Mammary epithelial cell (primary cell): ENCODE measurements at regions of chrX and their contacts with region 1.

Region 1: DNA sequence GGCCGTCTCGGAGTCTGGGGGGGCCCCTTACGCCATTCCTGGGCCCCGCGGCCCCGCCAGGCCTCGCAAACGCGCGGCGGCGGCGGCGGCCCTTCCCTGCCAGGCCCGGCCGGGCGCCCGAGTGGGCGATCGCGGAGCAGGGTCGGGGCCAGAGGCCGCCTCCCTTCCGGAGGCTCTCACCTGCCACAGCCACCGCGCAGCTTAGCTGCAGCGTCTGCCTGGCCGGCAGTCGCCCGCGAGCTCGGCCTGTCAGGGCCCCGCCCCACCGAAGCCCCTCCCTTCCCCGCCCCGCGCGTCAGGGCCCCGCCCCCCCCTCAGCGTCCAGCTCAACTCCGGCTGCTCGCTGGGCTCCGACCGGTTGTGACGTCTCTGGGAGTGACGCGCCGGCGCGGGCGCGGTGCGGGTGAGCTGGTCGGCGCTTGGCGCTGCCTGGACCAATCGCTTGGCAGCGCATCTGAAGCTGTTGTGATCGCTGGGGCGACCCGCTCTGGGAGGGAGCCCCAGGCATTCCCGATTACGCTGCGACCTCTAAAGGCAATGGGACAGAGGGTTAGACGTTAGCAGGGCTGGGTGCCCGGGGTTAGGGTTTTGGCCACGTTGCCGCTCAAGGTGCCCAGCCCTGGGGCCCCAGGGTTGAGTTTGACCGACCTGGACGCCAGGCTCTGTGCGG is at the start of gene SLC10A3:
- DNase-seq: peak; percentile 88
- H3K4me3 ChIP-seq: peak within 1 kb of the TSS; percentile 64 to 69 (median 68)
- H3K27ac ChIP-seq: peak within 1 kb of the TSS; percentile 75
- H3K4me1 ChIP-seq: peaks cover 5% of the 10 kb centered on the region
- H3K27me3 ChIP-seq: no peaks in the 10 kb centered on the region
- CTCF ChIP-seq: no peak
- total RNA-seq, gene SLC10A3: 27.2 to 29.6 TPM

Region 2: DNA sequence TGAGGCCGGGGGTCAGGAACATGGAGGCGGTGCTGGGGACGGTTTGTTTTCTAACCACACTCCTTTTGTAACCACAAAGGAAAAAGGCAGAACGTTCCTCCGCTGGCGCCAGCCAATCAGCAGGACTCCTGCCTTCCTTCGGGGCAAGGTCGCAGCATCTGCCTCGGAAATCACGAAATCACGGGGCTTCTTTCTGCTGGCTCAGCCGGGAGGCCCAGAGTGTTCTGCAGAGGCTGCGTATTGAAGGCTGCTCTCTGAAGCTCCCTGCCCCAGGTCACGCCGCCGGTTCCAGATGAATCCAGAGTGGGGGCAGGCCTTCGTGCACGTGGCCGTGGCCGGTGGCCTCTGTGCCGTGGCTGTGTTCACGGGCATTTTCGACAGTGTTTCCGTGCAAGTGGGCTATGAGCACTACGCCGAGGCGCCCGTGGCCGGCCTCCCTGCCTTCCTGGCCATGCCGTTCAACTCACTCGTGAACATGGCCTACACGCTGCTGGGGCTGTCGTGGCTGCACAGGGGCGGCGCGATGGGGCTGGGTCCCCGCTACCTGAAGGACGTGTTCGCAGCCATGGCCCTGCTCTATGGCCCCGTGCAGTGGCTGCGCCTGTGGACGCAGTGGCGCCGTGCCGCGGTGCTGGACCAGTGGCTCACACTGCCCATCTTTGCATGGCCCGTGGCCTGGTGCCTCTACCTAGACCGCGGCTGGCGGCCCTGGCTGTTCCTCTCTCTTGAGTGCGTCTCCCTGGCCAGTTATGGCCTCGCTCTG is 508.6 kb before region 1 on chrX:
- CTCF ChIA-PET with region 1: no interaction called
- dilution Hi-C with region 1: no loop called
- in situ Hi-C with region 1: no loop called
- intact Hi-C with region 1: no loop called
- DNase-seq: no peak
- H3K4me3 ChIP-seq: no peak overlapping the region
- H3K27ac ChIP-seq: no peak overlapping the region
- H3K4me1 ChIP-seq: peaks cover 5% of the 10 kb centered on the region
- H3K27me3 ChIP-seq: no peaks in the 10 kb centered on the region
- CTCF ChIP-seq: no peak

Region 3: GRCh38 chrX:154444755-154445246 is 45.7 kb before region 1 on chrX:
- CTCF ChIA-PET with region 1: no interaction called
- dilution Hi-C with region 1: no loop called
- in situ Hi-C with region 1: no loop called
- intact Hi-C with region 1: no loop called
- DNase-seq: no peak
- H3K4me3 ChIP-seq: peak overlapping the region; percentile 41 to 60 (median 57)
- H3K27ac ChIP-seq: no peak overlapping the region
- H3K4me1 ChIP-seq: peaks cover 16% of the 10 kb centered on the region
- H3K27me3 ChIP-seq: no peaks in the 10 kb centered on the region
- CTCF ChIP-seq: no peak

Region 4: DNA sequence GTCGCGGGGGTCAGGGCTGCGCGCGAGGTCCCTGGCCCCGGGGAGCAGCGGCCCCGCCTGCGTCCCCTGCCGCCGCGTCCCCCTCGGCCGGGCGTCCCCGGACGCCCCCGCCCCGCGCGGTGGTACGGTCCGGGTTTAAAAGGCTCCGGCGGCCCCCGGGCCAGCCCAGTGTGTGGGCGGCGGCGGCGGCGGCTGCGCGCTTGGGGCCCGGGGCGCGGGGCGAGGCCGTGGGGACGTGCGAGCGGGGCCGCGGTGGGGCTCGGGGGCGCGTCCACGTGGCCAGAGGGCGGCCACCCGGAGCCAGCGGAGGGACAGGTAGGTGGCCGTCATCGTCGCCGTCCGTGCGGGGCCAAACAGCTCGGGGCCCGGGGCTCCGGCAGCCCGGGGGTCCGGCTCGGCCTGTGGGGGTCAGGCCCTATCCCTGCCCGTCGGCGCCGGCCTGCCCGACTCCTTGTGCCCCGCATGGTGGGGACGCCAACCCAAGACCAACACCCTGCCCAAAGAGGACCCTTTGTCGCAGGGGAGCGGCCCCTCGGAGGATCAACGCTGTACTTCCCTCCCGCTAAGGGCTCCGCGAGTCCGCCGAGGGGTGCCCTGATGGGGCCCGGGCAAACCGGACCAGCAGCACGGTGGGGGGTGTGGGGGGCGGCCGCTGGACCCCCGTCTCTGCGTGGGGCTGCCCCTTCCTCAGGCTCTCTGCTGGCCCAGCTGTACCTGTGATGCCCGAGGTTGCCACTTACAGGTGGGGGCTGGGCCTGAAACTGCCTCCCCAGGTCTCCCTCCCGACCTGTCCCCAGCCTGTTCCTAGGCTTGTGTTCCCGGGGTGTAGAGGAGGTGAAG is 32.2 kb before region 1 on chrX and contains the start of gene PLXNA3:
- CTCF ChIA-PET with region 1: no interaction called
- dilution Hi-C with region 1: no loop called
- in situ Hi-C with region 1: no loop called
- intact Hi-C with region 1: loop called (anchors 1 kb)
- DNase-seq: no peak
- H3K4me3 ChIP-seq: peak within 1 kb of the TSS; percentile 56 to 77 (median 75)
- H3K27ac ChIP-seq: no peak within 1 kb of the TSS
- H3K4me1 ChIP-seq: peaks cover 4% of the 10 kb centered on the region
- H3K27me3 ChIP-seq: no peaks in the 10 kb centered on the region
- CTCF ChIP-seq: no peak
- total RNA-seq, gene PLXNA3: 21.2 to 56.9 TPM

Region 5: GRCh38 chrX:154505734-154506133 is 15.2 kb after region 1 on chrX:
- CTCF ChIA-PET with region 1: no interaction called
- dilution Hi-C with region 1: no loop called
- in situ Hi-C with region 1: no loop called
- intact Hi-C with region 1: no loop called
- DNase-seq: peak; percentile 44
- H3K4me3 ChIP-seq: no peak overlapping the region
- H3K27ac ChIP-seq: no peak overlapping the region
- H3K4me1 ChIP-seq: peaks cover 16% of the 10 kb centered on the region
- H3K27me3 ChIP-seq: no peaks in the 10 kb centered on the region
- CTCF ChIP-seq: no peak

Region 6: GRCh38 chrX:154515878-154516655 is 25.5 kb after region 1 on chrX and contains the start of gene FAM3A:
- CTCF ChIA-PET with region 1: no interaction called
- dilution Hi-C with region 1: no loop called
- in situ Hi-C with region 1: no loop called
- intact Hi-C with region 1: loop called (anchors 2 kb)
- DNase-seq: peak; percentile 80
- H3K4me3 ChIP-seq: peak within 1 kb of the TSS; percentile 40 to 71 (median 64)
- H3K27ac ChIP-seq: peak within 1 kb of the TSS; percentile 38
- H3K4me1 ChIP-seq: no peaks in the 10 kb centered on the region
- H3K27me3 ChIP-seq: no peaks in the 10 kb centered on the region
- CTCF ChIP-seq: no peak
- total RNA-seq, gene FAM3A: 24.3 to 41.4 TPM